Naive thymus-derived CD4-positive, alpha-beta T cell (primary cell): ENCODE measurements at regions of chr2 and their contacts with region 1.

Region 1: DNA sequence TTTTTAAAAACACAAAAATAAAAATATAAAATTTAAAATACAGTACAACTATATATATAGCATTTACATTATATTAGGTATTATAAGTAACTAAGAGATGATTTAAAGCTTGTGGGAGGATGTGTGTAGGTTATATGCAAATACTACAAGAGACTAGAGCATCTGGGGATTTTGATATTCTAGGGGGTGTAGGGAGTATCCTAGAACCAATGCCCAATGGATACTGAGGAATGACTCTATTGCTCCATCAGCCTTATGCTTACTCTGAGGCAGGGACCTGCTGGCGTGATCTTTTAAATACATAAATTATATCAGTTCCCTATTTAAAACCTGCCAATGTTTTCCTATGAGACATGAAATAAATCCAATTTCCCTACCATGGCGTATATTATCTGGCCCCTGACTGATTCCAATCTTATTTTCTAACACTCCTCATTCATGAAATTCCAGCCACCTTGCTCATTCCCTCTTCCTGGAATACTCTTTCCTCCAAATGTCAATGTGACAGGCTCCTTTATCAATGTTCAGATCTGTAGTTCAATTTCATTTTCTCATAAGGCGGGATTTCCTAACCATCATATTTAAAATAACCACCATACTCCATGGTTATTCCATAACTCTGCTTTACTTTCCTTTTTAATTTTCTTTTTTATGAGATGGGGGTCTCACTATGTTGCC is 22.2 kb downstream of the SP3 start:
- DNase-seq: no peak
- ATAC-seq: no peak
- H3K4me3 ChIP-seq: no peak overlapping the region
- H3K4me3 Mint-ChIP-seq: peak overlapping the region in 6 of 10 donors; percentile 6 to 68 (median 30)
- H3K27ac ChIP-seq: no peak overlapping the region
- H3K27ac Mint-ChIP-seq: peak overlapping the region in 2 of 9 donors; percentile 12 to 18
- H3K4me1 ChIP-seq: peaks cover 54 to 62% of the 10 kb centered on the region in 2 donors
- H3K4me1 Mint-ChIP-seq: peaks cover 29 to 91% (median 72%) of the 10 kb centered on the region in 7 donors
- H3K27me3 ChIP-seq: no peaks in the 10 kb centered on the region
- H3K27me3 Mint-ChIP-seq: no peaks in the 10 kb centered on the region

Region 2: GRCh38 chr2:173955004-173955403 is 12.0 kb after region 1 on chr2:
- CTCF ChIA-PET with region 1: no interaction called
- POLR2A ChIA-PET with region 1: interaction called, 3 read pairs
- intact Hi-C with region 1: loop called in 1 of 2 experiments (anchors 1 kb)
- DNase-seq: no peak
- ATAC-seq: peak; percentile 12
- H3K4me3 ChIP-seq: no peak overlapping the region
- H3K4me3 Mint-ChIP-seq: peak overlapping the region in 9 of 10 donors; percentile 41 to 99 (median 68)
- H3K27ac ChIP-seq: no peak overlapping the region
- H3K27ac Mint-ChIP-seq: peak overlapping the region in 3 of 9 donors; percentile 18 to 26 (median 22)
- H3K4me1 ChIP-seq: peaks cover 48 to 89% of the 10 kb centered on the region in 2 donors
- H3K4me1 Mint-ChIP-seq: peaks cover 73 to 100% (median 96%) of the 10 kb centered on the region in 7 donors
- H3K27me3 ChIP-seq: no peaks in the 10 kb centered on the region
- H3K27me3 Mint-ChIP-seq: no peaks in the 10 kb centered on the region